ENCODE measurements at regions of chr12 and their contacts with region 1.

Region 1: GRCh38 chr12:85920324-85920947 is 46.3 kb downstream of the NTS start:
- DNase-seq: no peak
- ATAC-seq: no peak
- H3K4me3 ChIP-seq: no peak overlapping the region
- H3K27ac ChIP-seq: no peak overlapping the region
- H3K4me1 ChIP-seq: no peaks in the 10 kb centered on the region
- H3K27me3 ChIP-seq: no peaks in the 10 kb centered on the region
- CTCF ChIP-seq: peak; percentile 57 to 77 (median 72)
- POLR2A ChIP-seq: no peak

Region 2: DNA sequence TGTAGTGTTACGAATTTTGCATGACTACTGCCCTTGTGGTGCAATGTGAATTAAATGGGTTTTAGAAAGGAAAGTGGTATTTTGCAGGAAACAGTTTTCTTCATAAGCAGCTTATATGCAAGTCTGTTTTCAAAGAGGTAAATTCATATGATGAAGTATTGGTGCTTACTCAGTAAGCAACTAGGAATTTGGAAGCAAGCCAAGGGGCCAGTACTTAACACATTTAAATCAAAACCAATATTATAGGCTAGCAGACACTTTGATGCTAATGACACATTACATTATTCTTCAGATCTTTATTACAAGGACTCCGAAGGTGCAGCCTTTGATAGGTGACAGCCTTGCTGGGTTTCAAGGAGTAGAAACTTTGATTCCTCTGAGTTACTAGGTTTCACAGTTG is 312.7 kb after region 1 on chr12:
- intact Hi-C with region 1: no loop called
- DNase-seq: no peak
- ATAC-seq: no peak
- H3K4me3 ChIP-seq: no peak overlapping the region
- H3K27ac ChIP-seq: no peak overlapping the region
- H3K4me1 ChIP-seq: no peaks in the 10 kb centered on the region
- H3K27me3 ChIP-seq: no peaks in the 10 kb centered on the region
- CTCF ChIP-seq: no peak
- POLR2A ChIP-seq: no peak

Region 3: DNA sequence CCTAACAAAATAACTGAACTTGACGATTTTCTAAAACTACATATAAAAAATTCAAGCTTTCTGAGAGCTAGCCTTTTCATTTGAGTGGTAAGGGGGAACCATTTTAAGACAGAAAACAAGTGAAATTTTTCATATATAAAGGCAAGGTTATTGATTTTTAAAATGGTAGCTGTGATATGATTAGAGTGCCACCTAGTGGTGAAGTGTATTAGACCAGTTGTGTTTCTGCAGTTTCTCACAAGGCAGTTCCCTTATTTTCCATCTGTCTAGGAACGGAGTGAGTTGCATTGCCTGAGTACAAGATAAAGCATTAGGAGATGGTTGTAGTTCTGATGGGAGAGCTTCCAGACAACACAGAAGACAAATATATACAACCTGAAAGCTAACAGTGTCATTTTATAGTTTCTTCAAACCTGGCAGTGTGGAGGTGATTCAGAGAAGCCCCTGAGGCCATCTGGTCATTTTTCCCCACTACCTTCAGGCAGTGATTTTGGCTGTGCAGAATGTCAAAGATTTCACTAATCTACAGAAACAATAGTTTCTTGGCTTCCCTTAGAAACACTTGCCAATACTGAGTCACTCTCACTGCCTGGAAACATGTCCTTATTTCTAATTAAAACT is 1927.9 kb after region 1 on chr12:
- intact Hi-C with region 1: loop called in 4 of 10 experiments (anchors 5 to 10 kb)
- DNase-seq: no peak
- ATAC-seq: peak in 1 of 4 donors; percentile 60
- H3K4me3 ChIP-seq: no peak overlapping the region
- H3K27ac ChIP-seq: no peak overlapping the region
- H3K4me1 ChIP-seq: no peaks in the 10 kb centered on the region
- H3K27me3 ChIP-seq: no peaks in the 10 kb centered on the region
- CTCF ChIP-seq: peak; percentile 70 to 89 (median 79)
- POLR2A ChIP-seq: no peak

Measured in heart left ventricle (tissue), 16 donors.